Tibial artery (tissue), 4 donors: ENCODE measurements at regions of chr2 and their contacts with region 1.

Region 1: GRCh38 chr2:88691339-88692183 is at the start of gene RPIA:
- DNase-seq: peak; percentile 99
- H3K4me3 ChIP-seq: peak within 1 kb of the TSS; percentile 80 to 98
- H3K27ac ChIP-seq: peak within 1 kb of the TSS; percentile 73 to 78
- H3K4me1 ChIP-seq: peaks cover 0 to 28% (median 18%) of the 10 kb centered on the region in 4 donors
- H3K27me3 ChIP-seq: no peaks in the 10 kb centered on the region
- CTCF ChIP-seq: peak; percentile 47 to 55

Region 2: GRCh38 chr2:88127888-88128653 is 563.5 kb before region 1 on chr2 and contains the start of gene FABP1:
- intact Hi-C with region 1: no loop called
- DNase-seq: no peak
- H3K4me3 ChIP-seq: no peak within 1 kb of the TSS
- H3K27ac ChIP-seq: no peak within 1 kb of the TSS
- H3K4me1 ChIP-seq: no peaks in the 10 kb centered on the region
- H3K27me3 ChIP-seq: peaks cover 0 to 11% of the 10 kb centered on the region in 2 donors
- CTCF ChIP-seq: no peak

Region 3: GRCh38 chr2:88504335-88504734 is 187.2 kb before region 1 on chr2:
- intact Hi-C with region 1: no loop called
- DNase-seq: no peak
- H3K4me3 ChIP-seq: no peak overlapping the region
- H3K27ac ChIP-seq: no peak overlapping the region
- H3K4me1 ChIP-seq: no peaks in the 10 kb centered on the region
- H3K27me3 ChIP-seq: no peaks in the 10 kb centered on the region
- CTCF ChIP-seq: no peak

Region 4: GRCh38 chr2:88627056-88627855 is 64.3 kb before region 1 on chr2 and contains the start of gene EIF2AK3:
- intact Hi-C with region 1: loop called (anchors 2 kb)
- DNase-seq: peak; percentile 98 to 100
- H3K4me3 ChIP-seq: peak within 1 kb of the TSS; percentile 71 to 74
- H3K27ac ChIP-seq: peak within 1 kb of the TSS; percentile 94
- H3K4me1 ChIP-seq: peaks cover 0 to 35% (median 17%) of the 10 kb centered on the region in 4 donors
- H3K27me3 ChIP-seq: no peaks in the 10 kb centered on the region
- CTCF ChIP-seq: peak; percentile 12 to 64